ENCODE measurements at regions of chr15 and their contacts with region 1.

Region 1: DNA sequence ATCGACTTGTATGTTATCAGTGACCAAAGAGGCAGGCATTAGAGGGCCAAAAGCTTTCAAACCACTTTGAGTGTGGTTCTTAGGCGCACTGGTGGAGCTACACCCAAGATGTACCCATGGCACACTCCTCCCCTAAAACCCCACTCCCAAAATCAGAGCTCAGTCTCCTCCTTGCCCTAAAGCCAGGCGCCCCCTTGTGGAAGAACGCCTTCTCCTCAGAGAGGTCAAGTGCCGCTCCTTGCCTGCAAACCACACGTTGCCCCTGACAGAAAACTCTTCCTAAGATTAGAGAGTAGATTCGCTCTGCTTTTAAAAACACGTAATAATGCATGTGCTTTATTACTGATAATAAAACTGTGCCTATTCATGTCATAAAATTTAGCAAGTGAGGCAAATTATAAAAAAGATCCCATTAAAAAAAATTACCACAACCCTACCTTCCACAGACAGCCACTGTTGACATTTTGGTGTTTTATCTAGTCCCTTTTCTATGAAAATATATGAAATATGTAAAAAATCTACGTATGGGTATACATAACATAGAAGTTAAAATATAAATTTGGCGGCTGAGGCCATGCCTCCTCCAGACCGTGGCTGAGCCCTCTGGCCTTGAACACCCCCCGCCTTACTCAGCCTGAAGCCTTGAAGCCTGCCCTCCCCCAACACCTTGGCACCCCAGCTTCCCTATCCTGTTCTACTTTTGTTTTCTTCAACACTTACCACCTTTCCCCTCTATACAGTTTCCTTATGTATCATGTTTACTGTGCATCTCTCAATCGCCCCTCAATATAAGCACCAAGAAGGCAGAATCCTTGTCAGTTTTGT is 33.5 kb downstream of the BCL2L10 start:
- DNase-seq: peak; percentile 51 to 96
- H3K4me3 ChIP-seq: no peak overlapping the region
- H3K27ac ChIP-seq: no peak overlapping the region
- H3K4me1 ChIP-seq: peaks cover 0 to 4% (median 1%) of the 10 kb centered on the region in 4 experiments; a peak in 3 of 7 replicates
- H3K27me3 ChIP-seq: no peaks in the 10 kb centered on the region
- CTCF ChIP-seq: peak; percentile 84 to 92 (median 87)
- EP300 ChIP-seq: no peak
- POLR2A ChIP-seq: no peak
- RAD21 ChIP-seq: peak; percentile 83 to 84

Region 2: GRCh38 chr15:51955504-51956101 is 123.5 kb before region 1 on chr15:
- CTCF ChIA-PET with region 1: interaction called, 12 read pairs
- POLR2A ChIA-PET with region 1: no interaction called
- DNase-seq: no peak
- H3K4me3 ChIP-seq: no peak overlapping the region
- H3K27ac ChIP-seq: no peak overlapping the region
- H3K4me1 ChIP-seq: no peaks in the 10 kb centered on the region
- H3K27me3 ChIP-seq: no peaks in the 10 kb centered on the region
- CTCF ChIP-seq: no peak
- EP300 ChIP-seq: no peak
- POLR2A ChIP-seq: no peak
- RAD21 ChIP-seq: no peak

Region 3: GRCh38 chr15:51992976-51993375 is 86.1 kb before region 1 on chr15:
- CTCF ChIA-PET with region 1: interaction called, 14 read pairs
- POLR2A ChIA-PET with region 1: no interaction called
- DNase-seq: no peak
- H3K4me3 ChIP-seq: no peak overlapping the region
- H3K27ac ChIP-seq: no peak overlapping the region
- H3K4me1 ChIP-seq: no peaks in the 10 kb centered on the region
- H3K27me3 ChIP-seq: no peaks in the 10 kb centered on the region
- CTCF ChIP-seq: no peak
- EP300 ChIP-seq: no peak
- POLR2A ChIP-seq: no peak
- RAD21 ChIP-seq: no peak

Region 4: GRCh38 chr15:52039925-52040781 is 38.9 kb before region 1 on chr15:
- CTCF ChIA-PET with region 1: interaction called, 15 read pairs
- POLR2A ChIA-PET with region 1: no interaction called
- DNase-seq: no peak
- H3K4me3 ChIP-seq: no peak overlapping the region
- H3K27ac ChIP-seq: 0 out of 2 replicates have a peak overlapping the region, but pooled peaks have one; percentile 16
- H3K4me1 ChIP-seq: peaks cover 0 to 10% (median 6%) of the 10 kb centered on the region in 4 experiments; a peak in 5 of 7 replicates
- H3K27me3 ChIP-seq: no peaks in the 10 kb centered on the region
- CTCF ChIP-seq: no peak
- EP300 ChIP-seq: no peak
- POLR2A ChIP-seq: no peak
- RAD21 ChIP-seq: no peak

Region 5: GRCh38 chr15:52121896-52122295 is 42.8 kb after region 1 on chr15:
- CTCF ChIA-PET with region 1: no interaction called
- POLR2A ChIA-PET with region 1: no interaction called
- DNase-seq: no peak
- H3K4me3 ChIP-seq: no peak overlapping the region
- H3K27ac ChIP-seq: no peak overlapping the region
- H3K4me1 ChIP-seq: peaks cover 0 to 2% (median 0%) of the 10 kb centered on the region in 4 experiments; a peak in 2 of 7 replicates
- H3K27me3 ChIP-seq: no peaks in the 10 kb centered on the region
- CTCF ChIP-seq: no peak
- EP300 ChIP-seq: no peak
- POLR2A ChIP-seq: no peak
- RAD21 ChIP-seq: no peak

Region 6: GRCh38 chr15:52139599-52140491 is 60.8 kb after region 1 on chr15:
- CTCF ChIA-PET with region 1: interaction called, 12 read pairs
- POLR2A ChIA-PET with region 1: no interaction called
- DNase-seq: peak; percentile 51 to 91
- H3K4me3 ChIP-seq: no peak overlapping the region
- H3K27ac ChIP-seq: no peak overlapping the region
- H3K4me1 ChIP-seq: peaks cover 0 to 2% (median 0%) of the 10 kb centered on the region in 4 experiments; a peak in 3 of 7 replicates
- H3K27me3 ChIP-seq: no peaks in the 10 kb centered on the region
- CTCF ChIP-seq: peak; percentile 75 to 92 (median 86)
- EP300 ChIP-seq: no peak
- POLR2A ChIP-seq: no peak
- RAD21 ChIP-seq: peak; percentile 61 to 69; a peak in 3 of 4 replicates